ENCODE measurements at regions of chr10 and their contacts with region 1.

Region 1: DNA sequence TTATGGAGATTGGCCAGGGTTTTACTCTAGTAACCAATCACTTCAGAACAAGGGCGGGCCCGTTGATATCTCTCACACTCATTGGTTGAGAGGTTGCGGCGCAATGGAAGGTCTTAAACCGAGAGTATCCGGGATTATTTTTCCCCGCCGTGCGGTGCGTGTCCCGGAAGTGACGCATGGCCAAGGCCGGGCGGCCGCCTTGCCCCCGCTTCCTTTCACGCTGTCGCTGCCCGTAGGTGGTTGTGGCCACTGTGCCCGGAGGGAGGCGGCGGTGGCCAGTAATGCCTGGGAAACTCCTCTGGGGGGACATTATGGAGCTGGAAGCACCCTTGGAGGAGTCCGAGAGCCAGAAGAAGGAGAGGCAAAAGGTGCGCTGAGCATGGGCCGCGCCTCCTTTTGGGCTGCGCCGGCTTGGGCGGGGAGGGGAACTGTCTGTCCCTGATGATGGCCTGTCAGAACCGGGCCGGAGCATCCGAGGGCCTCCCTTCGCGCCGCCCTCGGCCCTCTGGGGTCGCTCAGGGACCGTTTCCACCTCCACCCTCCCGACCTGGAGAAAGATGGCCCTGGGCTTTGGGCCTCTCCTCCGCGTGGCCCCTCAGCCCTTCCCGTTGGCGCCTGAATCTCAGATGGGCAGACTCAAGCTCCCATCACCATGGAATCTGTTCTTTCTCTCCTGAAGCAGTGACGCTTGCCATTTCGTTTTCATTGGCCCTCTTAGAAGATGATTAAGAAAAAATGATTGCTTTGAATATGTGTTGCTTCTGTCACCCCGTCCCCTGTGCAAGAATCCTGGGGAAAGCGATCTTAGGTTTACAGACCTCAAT is at the start of gene DDX50:
- DNase-seq: peak; percentile 97
- ATAC-seq: peak; percentile 98
- H3K4me3 ChIP-seq: peak within 1 kb of the TSS; percentile 69
- H3K27ac ChIP-seq: peak within 1 kb of the TSS; percentile 95
- H3K4me1 ChIP-seq: peaks cover 3% of the 10 kb centered on the region; the same call in 1 of the 2 replicates
- H3K27me3 ChIP-seq: no peaks in the 10 kb centered on the region
- CTCF ChIP-seq: 0 out of 6 replicates have a peak, but pooled peaks of 2 of the 3 experiments have one; percentile 2 to 6
- EP300 ChIP-seq: no peak
- POLR2A ChIP-seq: peak; percentile 91
- RAD21 ChIP-seq: no peak
- polyA plus RNA-seq, gene DDX50: 24.9 to 32.0 TPM

Region 2: GRCh38 chr10:68331455-68332258 is 569.7 kb before region 1 on chr10 and contains the start of gene HNRNPH3:
- CTCF ChIA-PET with region 1: no interaction called
- POLR2A ChIA-PET with region 1: no interaction called
- RAD21 ChIA-PET with region 1: no interaction called
- SMC1A ChIA-PET with region 1: no interaction called
- in situ Hi-C with region 1: no loop called
- intact Hi-C with region 1: loop called (anchors 10 kb)
- DNase-seq: peak; percentile 93
- ATAC-seq: peak; percentile 80
- H3K4me3 ChIP-seq: peak within 1 kb of the TSS; percentile 99
- H3K27ac ChIP-seq: peak within 1 kb of the TSS; percentile 99
- H3K4me1 ChIP-seq: no peaks in the 10 kb centered on the region; the same call in 1 of the 2 replicates
- H3K27me3 ChIP-seq: no peaks in the 10 kb centered on the region
- CTCF ChIP-seq: no peak
- EP300 ChIP-seq: peak in 1 of 2 experiments; percentile 37; a peak in 1 of 4 replicates
- POLR2A ChIP-seq: peak; percentile 98
- RAD21 ChIP-seq: no peak
- polyA plus RNA-seq, gene HNRNPH3: 76.0 to 98.7 TPM

Region 3: GRCh38 chr10:68526626-68527307 is 374.5 kb before region 1 on chr10:
- CTCF ChIA-PET with region 1: no interaction called
- POLR2A ChIA-PET with region 1: interaction called, 3 read pairs
- RAD21 ChIA-PET with region 1: no interaction called
- SMC1A ChIA-PET with region 1: no interaction called
- in situ Hi-C with region 1: no loop called
- intact Hi-C with region 1: loop called (anchors 2 kb)
- DNase-seq: no peak
- ATAC-seq: peak; percentile 79
- H3K4me3 ChIP-seq: peak overlapping the region; percentile 89
- H3K27ac ChIP-seq: peak overlapping the region; percentile 43
- H3K4me1 ChIP-seq: no peaks in the 10 kb centered on the region
- H3K27me3 ChIP-seq: no peaks in the 10 kb centered on the region
- CTCF ChIP-seq: no peak
- EP300 ChIP-seq: no peak
- POLR2A ChIP-seq: no peak
- RAD21 ChIP-seq: no peak

Region 4: DNA sequence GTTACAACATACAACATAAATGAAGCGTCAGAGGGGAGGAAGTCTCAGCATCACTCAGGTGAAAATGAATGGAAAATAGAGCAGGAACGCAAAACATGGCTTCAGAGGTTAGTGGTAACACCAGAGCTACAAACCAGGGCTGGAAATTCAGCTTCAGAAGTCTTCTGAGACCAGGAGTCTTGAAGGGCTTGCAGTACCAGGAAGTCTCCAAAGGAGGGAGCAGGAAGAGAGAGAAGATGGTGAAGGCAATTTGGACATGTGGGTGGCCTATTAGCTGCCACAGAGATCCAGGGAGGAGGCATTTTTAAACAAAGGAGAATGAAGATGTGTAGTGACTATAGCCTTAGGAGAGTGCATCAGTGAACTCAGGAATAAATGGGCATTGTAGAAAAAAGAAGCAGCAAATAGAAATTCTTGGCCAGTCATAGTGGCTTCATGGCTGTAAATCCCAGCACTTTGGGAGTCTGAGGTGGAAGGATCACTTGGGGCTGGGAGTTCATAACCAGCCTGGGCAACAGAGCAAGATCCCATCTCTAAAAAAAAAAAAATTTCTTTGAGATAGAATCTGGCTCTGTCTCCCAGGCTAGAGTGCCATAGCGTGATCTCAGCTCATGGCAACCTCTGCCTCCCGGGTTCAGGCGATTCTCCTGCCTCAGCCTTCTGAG is 350.4 kb before region 1 on chr10:
- CTCF ChIA-PET with region 1: interaction called, 10 read pairs
- POLR2A ChIA-PET with region 1: interaction called, 3 read pairs
- RAD21 ChIA-PET with region 1: no interaction called
- SMC1A ChIA-PET with region 1: interaction called, 5 read pairs
- in situ Hi-C with region 1: no loop called
- intact Hi-C with region 1: loop called (anchors 10 kb)
- DNase-seq: no peak
- ATAC-seq: peak; percentile 93
- H3K4me3 ChIP-seq: no peak overlapping the region
- H3K27ac ChIP-seq: no peak overlapping the region
- H3K4me1 ChIP-seq: no peaks in the 10 kb centered on the region
- H3K27me3 ChIP-seq: no peaks in the 10 kb centered on the region
- CTCF ChIP-seq: peak; percentile 77 to 90 (median 89)
- EP300 ChIP-seq: no peak
- POLR2A ChIP-seq: no peak
- RAD21 ChIP-seq: peak; percentile 88

Region 5: GRCh38 chr10:68792115-68792514 is 109.2 kb before region 1 on chr10:
- CTCF ChIA-PET with region 1: no interaction called
- POLR2A ChIA-PET with region 1: no interaction called
- RAD21 ChIA-PET with region 1: no interaction called
- SMC1A ChIA-PET with region 1: no interaction called
- in situ Hi-C with region 1: no loop called
- intact Hi-C with region 1: loop called (anchors 10 kb)
- DNase-seq: no peak
- ATAC-seq: no peak
- H3K4me3 ChIP-seq: no peak overlapping the region
- H3K27ac ChIP-seq: no peak overlapping the region
- H3K4me1 ChIP-seq: no peaks in the 10 kb centered on the region
- H3K27me3 ChIP-seq: no peaks in the 10 kb centered on the region
- CTCF ChIP-seq: no peak; a peak in 1 of 6 replicates
- EP300 ChIP-seq: no peak
- POLR2A ChIP-seq: no peak
- RAD21 ChIP-seq: no peak

Region 6: DNA sequence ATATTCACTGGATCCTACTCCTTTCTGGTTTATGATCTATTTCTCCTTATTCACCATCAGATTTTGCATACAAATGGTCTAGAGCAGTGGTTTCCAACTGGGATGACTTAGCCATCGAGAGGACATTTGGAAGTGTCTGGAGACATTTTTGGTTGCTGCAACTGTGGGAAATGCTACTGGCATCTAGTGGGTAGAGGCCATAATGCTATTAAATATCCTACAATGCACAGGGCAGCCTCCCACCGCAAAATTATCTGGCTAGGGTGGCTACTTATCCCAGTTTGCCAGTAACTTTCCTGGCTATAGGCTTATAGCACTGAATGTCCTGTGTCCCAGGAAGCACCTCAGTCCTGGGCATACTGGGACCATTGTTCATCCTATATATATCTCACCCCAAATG is 21.7 kb before region 1 on chr10:
- CTCF ChIA-PET with region 1: no interaction called
- POLR2A ChIA-PET with region 1: no interaction called
- RAD21 ChIA-PET with region 1: no interaction called
- SMC1A ChIA-PET with region 1: no interaction called
- in situ Hi-C with region 1: no loop called
- intact Hi-C with region 1: no loop called
- DNase-seq: no peak
- ATAC-seq: no peak
- H3K4me3 ChIP-seq: no peak overlapping the region
- H3K27ac ChIP-seq: no peak overlapping the region
- H3K4me1 ChIP-seq: no peaks in the 10 kb centered on the region
- H3K27me3 ChIP-seq: no peaks in the 10 kb centered on the region
- CTCF ChIP-seq: no peak
- EP300 ChIP-seq: no peak
- POLR2A ChIP-seq: no peak
- RAD21 ChIP-seq: no peak

Measured in GM12878 (cell line).